Vagina (tissue), 2 donors: ENCODE measurements at regions of chr6 and their contacts with region 1.

Region 1: DNA sequence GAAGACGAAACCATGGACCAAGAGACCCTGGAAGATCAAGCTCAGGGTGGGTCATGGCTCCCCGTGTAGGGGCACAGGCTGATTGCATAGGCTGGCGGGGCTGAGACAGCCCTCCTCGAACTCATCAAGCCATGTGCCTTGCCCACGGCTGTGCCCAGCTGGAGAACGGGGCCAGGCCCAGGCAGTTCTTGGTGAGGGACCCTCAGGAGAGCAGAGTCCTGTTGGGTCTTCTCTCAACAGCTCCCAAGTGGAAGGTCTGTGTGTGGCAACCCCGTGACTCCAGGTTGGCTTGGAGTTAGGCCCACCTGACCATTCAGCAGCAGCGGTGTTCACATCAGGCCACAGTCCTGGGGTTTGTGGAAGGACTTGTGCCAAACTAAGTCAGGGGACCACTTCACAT is 276.5 kb downstream of the QKI start:
- DNase-seq: peak in 1 of 2 donors; percentile 65
- H3K4me3 ChIP-seq: no peak overlapping the region
- H3K27ac ChIP-seq: no peak overlapping the region
- H3K4me1 ChIP-seq: no peaks in the 10 kb centered on the region
- H3K27me3 ChIP-seq: no peaks in the 10 kb centered on the region
- CTCF ChIP-seq: no peak
- POLR2A ChIP-seq: no peak

Region 2: GRCh38 chr6:163186527-163186926 is 504.5 kb before region 1 on chr6:
- intact Hi-C with region 1: loop called (anchors 2 kb)
- DNase-seq: no peak
- H3K4me3 ChIP-seq: no peak overlapping the region
- H3K27ac ChIP-seq: no peak overlapping the region
- H3K4me1 ChIP-seq: peaks cover 6% of the 10 kb centered on the region
- H3K27me3 ChIP-seq: no peaks in the 10 kb centered on the region
- CTCF ChIP-seq: no peak
- POLR2A ChIP-seq: no peak

Region 3: GRCh38 chr6:163367497-163368183 is 323.4 kb before region 1 on chr6:
- intact Hi-C with region 1: no loop called
- DNase-seq: no peak
- H3K4me3 ChIP-seq: no peak overlapping the region
- H3K27ac ChIP-seq: no peak overlapping the region
- H3K4me1 ChIP-seq: no peaks in the 10 kb centered on the region
- H3K27me3 ChIP-seq: no peaks in the 10 kb centered on the region
- CTCF ChIP-seq: no peak
- POLR2A ChIP-seq: no peak

Region 4: GRCh38 chr6:163745536-163746400 is 54.7 kb after region 1 on chr6:
- intact Hi-C with region 1: no loop called
- DNase-seq: peak; percentile 61 to 81
- H3K4me3 ChIP-seq: no peak overlapping the region
- H3K27ac ChIP-seq: no peak overlapping the region
- H3K4me1 ChIP-seq: no peaks in the 10 kb centered on the region
- H3K27me3 ChIP-seq: no peaks in the 10 kb centered on the region
- CTCF ChIP-seq: no peak
- POLR2A ChIP-seq: no peak